Endothelial cell of umbilical vein (primary cell): ENCODE measurements at regions of chr7 and their contacts with region 1.

Region 1: DNA sequence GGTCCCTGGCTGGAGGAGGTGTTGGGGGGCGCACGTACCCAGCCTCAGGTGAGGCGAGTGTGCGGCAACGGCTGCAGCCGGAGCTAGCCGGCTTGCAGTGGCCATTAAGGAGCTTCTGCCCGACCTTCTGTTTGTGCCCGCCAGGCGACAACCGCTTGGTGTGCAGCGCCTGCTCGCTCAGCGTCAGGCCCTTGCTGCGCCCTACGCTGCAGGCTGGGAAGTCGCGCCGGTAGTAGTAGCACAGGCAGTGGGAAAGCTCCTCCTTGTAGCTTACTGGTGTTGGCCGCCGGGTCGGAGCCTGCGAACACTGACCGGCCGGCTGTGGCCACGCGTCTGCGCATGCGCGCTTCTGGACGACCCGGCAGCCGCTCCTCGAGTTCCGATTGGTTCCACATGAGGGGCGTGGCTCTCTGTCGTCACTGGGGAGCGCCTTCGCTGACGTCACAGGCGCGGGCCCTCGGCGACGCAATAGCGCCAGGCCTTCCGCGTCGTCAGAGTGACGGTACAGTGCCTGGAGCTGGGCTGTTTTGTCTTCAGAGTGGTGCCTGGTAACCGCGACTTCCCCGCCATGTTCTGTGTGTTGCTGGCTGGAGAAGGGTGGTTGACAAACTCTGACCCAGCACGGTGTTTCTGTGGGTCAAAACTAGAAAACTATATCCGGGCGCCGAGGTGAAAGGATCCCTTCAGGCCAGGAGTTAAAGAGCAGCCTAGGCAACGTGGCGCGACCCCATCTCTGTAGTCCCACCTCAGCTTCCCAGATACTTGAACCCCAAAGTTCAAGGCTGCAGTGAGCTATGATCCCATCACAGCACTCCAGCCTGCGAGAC is 76.3 kb upstream of the TMEM248 start:
- DNase-seq: peak; percentile 99
- H3K4me3 ChIP-seq: peak overlapping the region; percentile 24 to 62 (median 59)
- H3K27ac ChIP-seq: peak overlapping the region; percentile 90
- H3K4me1 ChIP-seq: peaks cover 8% of the 10 kb centered on the region
- H3K27me3 ChIP-seq: no peaks in the 10 kb centered on the region
- CTCF ChIP-seq: peak in 1 of 2 donors; percentile 44
- POLR2A ChIP-seq: peak; percentile 92

Region 2: GRCh38 chr7:66920769-66921395 is 76.1 kb after region 1 on chr7 and contains the start of gene TMEM248:
- CTCF ChIA-PET with region 1: no interaction called
- POLR2A ChIA-PET with region 1: interaction called, 6 read pairs
- dilution Hi-C with region 1: no loop called
- intact Hi-C with region 1: loop called (anchors 2 kb)
- DNase-seq: peak; percentile 83
- H3K4me3 ChIP-seq: peak within 1 kb of the TSS; percentile 76 to 95 (median 86)
- H3K27ac ChIP-seq: peak within 1 kb of the TSS; percentile 80
- H3K4me1 ChIP-seq: peaks cover 5% of the 10 kb centered on the region
- H3K27me3 ChIP-seq: no peaks in the 10 kb centered on the region
- CTCF ChIP-seq: no peak
- POLR2A ChIP-seq: peak; percentile 61
- total RNA-seq, gene TMEM248: 97.6 and 107 TPM in 2 replicates

Region 3: GRCh38 chr7:66952343-66953043 is 107.7 kb after region 1 on chr7:
- CTCF ChIA-PET with region 1: no interaction called
- POLR2A ChIA-PET with region 1: no interaction called
- dilution Hi-C with region 1: no loop called
- intact Hi-C with region 1: loop called (anchors 2 kb)
- DNase-seq: peak; percentile 68
- H3K4me3 ChIP-seq: no peak overlapping the region
- H3K27ac ChIP-seq: peak overlapping the region; percentile 83
- H3K4me1 ChIP-seq: peaks cover 36% of the 10 kb centered on the region
- H3K27me3 ChIP-seq: no peaks in the 10 kb centered on the region
- CTCF ChIP-seq: no peak
- POLR2A ChIP-seq: no peak

Region 4: GRCh38 chr7:67302113-67303039 is 457.6 kb after region 1 on chr7:
- CTCF ChIA-PET with region 1: no interaction called
- POLR2A ChIA-PET with region 1: no interaction called
- dilution Hi-C with region 1: no loop called
- intact Hi-C with region 1: loop called (anchors 10 kb)
- DNase-seq: peak; percentile 99
- H3K4me3 ChIP-seq: peak overlapping the region; percentile 46 to 66 (median 53)
- H3K27ac ChIP-seq: peak overlapping the region; percentile 86
- H3K4me1 ChIP-seq: no peaks in the 10 kb centered on the region
- H3K27me3 ChIP-seq: no peaks in the 10 kb centered on the region
- CTCF ChIP-seq: peak in 1 of 2 donors; percentile 47
- POLR2A ChIP-seq: peak; percentile 85